ENCODE measurements at regions of chr1 and their contacts with region 1.

Region 1: GRCh38 chr1:33472349-33472980 is at the start of gene ZSCAN20:
- DNase-seq: peak; percentile 62 to 91 (median 80)
- ATAC-seq: peak; percentile 98
- H3K4me3 ChIP-seq: peak within 1 kb of the TSS; percentile 63
- H3K4me3 Mint-ChIP-seq: peak within 1 kb of the TSS; percentile 90
- H3K27ac ChIP-seq: peak within 1 kb of the TSS; percentile 31 to 39
- H3K27ac Mint-ChIP-seq: peak within 1 kb of the TSS; percentile 24
- H3K4me1 ChIP-seq: peaks cover 22% of the 10 kb centered on the region
- H3K4me1 Mint-ChIP-seq: peaks cover 38% of the 10 kb centered on the region
- H3K27me3 ChIP-seq: no peaks in the 10 kb centered on the region
- H3K27me3 Mint-ChIP-seq: no peaks in the 10 kb centered on the region
- CTCF ChIP-seq: no peak
- total RNA-seq, gene ZSCAN20: 0.27 to 0.50 TPM

Region 2: GRCh38 chr1:32639489-32640075 is 832.9 kb before region 1 on chr1:
- CTCF ChIA-PET with region 1: no interaction called
- POLR2A ChIA-PET with region 1: no interaction called
- intact Hi-C with region 1: loop called in 1 of 2 experiments (anchors 10 kb)
- DNase-seq: no peak
- ATAC-seq: no peak
- H3K4me3 ChIP-seq: no peak overlapping the region
- H3K4me3 Mint-ChIP-seq: no peak overlapping the region
- H3K27ac ChIP-seq: no peak overlapping the region
- H3K27ac Mint-ChIP-seq: no peak overlapping the region
- H3K4me1 ChIP-seq: no peaks in the 10 kb centered on the region
- H3K4me1 Mint-ChIP-seq: peaks cover 19% of the 10 kb centered on the region
- H3K27me3 ChIP-seq: no peaks in the 10 kb centered on the region
- H3K27me3 Mint-ChIP-seq: no peaks in the 10 kb centered on the region
- CTCF ChIP-seq: no peak

Region 3: DNA sequence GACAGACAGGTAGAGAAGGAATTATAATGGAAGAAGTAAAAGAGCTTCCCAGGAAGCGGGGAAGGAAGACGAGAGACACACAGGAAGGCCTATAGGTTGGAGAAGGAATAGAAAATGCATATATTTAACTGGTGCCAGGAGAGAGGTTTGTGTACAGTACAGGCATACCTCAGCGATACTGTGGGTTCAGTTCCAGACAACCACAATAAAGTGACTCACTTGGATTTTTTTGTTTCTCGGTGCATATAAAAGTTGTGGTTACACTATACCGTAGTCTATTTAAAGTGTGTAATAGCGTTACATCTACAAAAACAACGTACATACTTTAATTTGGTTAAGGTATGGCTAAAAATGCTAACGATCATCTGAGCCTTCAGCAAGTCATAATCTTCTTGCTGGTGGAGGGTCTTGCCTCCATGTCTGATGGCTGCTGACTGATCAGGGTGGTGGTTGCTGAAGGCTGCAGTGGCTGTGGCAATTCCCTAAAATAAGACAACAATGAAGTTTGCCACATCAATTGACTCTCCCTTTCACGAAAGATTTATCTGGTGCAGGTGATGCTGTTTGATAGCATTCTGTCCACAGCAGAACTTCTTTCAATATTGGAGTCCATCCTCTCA is 671.3 kb before region 1 on chr1:
- CTCF ChIA-PET with region 1: no interaction called
- POLR2A ChIA-PET with region 1: no interaction called
- intact Hi-C with region 1: no loop called
- DNase-seq: peak in 8 of 14 experiments; percentile 6 to 81 (median 26)
- ATAC-seq: peak; percentile 73
- H3K4me3 ChIP-seq: no peak overlapping the region
- H3K4me3 Mint-ChIP-seq: peak overlapping the region; percentile 21
- H3K27ac ChIP-seq: peak overlapping the region in 1 of 2 donors; percentile 17
- H3K27ac Mint-ChIP-seq: peak overlapping the region; percentile 84
- H3K4me1 ChIP-seq: peaks cover 49% of the 10 kb centered on the region
- H3K4me1 Mint-ChIP-seq: peaks cover 41% of the 10 kb centered on the region
- H3K27me3 ChIP-seq: no peaks in the 10 kb centered on the region
- H3K27me3 Mint-ChIP-seq: no peaks in the 10 kb centered on the region
- CTCF ChIP-seq: no peak

Region 4: DNA sequence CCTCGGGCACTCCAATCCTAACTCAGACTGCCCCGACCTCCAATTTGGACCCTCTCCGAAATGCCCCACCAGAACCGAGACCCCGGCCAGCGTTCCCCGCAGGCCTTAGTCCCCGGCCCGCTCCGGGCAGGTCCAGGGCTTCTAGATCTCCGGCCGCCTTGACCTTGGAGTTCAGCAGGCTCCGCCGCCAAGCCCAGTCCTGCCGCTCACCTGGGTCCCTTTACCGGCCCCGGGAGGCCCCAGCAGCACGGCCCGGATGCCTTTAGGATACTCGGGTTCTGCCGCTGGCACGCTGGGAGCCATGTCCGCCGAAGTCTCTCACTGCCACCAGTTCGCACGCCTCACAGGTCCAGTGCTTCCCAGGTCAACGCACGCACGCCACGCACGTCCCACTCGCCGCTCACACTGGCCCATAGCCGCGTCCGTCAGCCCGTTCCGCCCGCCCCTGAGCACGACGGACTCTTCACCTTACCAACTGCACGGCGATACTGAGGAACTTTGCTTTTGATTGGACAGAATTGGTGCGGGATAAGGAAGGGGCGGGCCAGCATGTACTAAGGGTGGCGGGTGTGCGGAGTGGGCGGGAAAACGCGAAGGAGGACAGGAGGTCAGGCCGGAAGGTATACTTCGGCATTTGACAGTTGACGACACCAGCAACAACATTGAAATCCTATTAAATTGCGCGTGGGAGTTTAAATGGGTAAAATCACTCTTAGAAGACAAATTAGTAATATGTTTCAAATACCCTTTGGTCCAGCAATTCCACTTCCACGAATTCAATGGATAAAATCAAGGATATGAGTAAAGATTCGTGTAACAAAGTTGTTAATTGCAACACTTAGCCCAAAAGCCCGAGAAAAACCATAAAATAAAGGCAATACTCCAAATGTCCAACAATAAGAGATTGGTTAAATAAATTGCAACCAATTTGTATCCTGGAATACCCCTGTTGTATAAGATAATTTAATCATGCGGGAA is 435.6 kb before region 1 on chr1 and contains the start of gene AK2:
- CTCF ChIA-PET with region 1: no interaction called
- POLR2A ChIA-PET with region 1: no interaction called
- intact Hi-C with region 1: loop called in 1 of 2 experiments (anchors 2 kb)
- DNase-seq: peak; percentile 71 to 95 (median 86)
- ATAC-seq: peak; percentile 99
- H3K4me3 ChIP-seq: peak within 1 kb of the TSS; percentile 93
- H3K4me3 Mint-ChIP-seq: peak within 1 kb of the TSS; percentile 98
- H3K27ac ChIP-seq: peak within 1 kb of the TSS in 1 of 2 donors; percentile 67
- H3K27ac Mint-ChIP-seq: peak within 1 kb of the TSS; percentile 34
- H3K4me1 ChIP-seq: peaks cover 35% of the 10 kb centered on the region
- H3K4me1 Mint-ChIP-seq: peaks cover 48% of the 10 kb centered on the region
- H3K27me3 ChIP-seq: no peaks in the 10 kb centered on the region
- H3K27me3 Mint-ChIP-seq: no peaks in the 10 kb centered on the region
- CTCF ChIP-seq: no peak
- total RNA-seq, gene AK2: 25.6 to 30.4 TPM

Region 5: DNA sequence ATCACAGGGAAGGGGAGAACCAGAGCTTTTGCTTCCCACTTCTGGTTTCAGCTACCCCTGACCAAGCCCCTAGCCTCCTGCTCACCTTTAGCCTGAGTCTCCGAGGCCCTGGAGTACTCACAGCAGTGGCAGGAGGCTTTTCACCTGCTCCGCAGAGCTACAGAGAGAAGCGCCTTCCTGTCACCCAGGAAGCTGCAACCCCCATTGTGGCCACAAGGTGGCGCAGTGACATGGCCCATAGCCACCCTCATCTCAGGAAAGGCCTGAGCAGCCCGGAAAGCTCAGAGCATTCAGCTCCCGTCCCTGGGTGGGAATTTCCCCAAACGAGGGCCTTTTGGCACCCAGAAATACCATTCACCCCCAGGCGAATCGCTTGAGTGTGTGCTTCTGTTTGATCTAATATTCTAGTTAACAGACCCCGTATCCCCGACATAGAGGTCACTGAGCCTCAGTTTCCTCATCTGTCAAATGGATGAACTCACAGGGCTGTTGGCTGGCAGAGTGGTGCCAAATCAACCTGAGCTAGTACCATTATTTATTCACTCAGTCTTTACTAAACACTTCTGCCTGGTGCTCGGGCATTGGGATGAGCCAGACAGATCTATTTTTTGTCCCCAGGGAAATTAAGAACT is 176.9 kb before region 1 on chr1:
- CTCF ChIA-PET with region 1: interaction called, 7 read pairs
- POLR2A ChIA-PET with region 1: no interaction called
- intact Hi-C with region 1: loop called (anchors 1 to 2 kb)
- DNase-seq: peak; percentile 74 to 91 (median 86)
- ATAC-seq: peak; percentile 93
- H3K4me3 ChIP-seq: no peak overlapping the region
- H3K4me3 Mint-ChIP-seq: no peak overlapping the region
- H3K27ac ChIP-seq: no peak overlapping the region
- H3K27ac Mint-ChIP-seq: peak overlapping the region; percentile 58
- H3K4me1 ChIP-seq: peaks cover 15% of the 10 kb centered on the region
- H3K4me1 Mint-ChIP-seq: peaks cover 23% of the 10 kb centered on the region
- H3K27me3 ChIP-seq: no peaks in the 10 kb centered on the region
- H3K27me3 Mint-ChIP-seq: no peaks in the 10 kb centered on the region
- CTCF ChIP-seq: peak; percentile 93

Region 6: DNA sequence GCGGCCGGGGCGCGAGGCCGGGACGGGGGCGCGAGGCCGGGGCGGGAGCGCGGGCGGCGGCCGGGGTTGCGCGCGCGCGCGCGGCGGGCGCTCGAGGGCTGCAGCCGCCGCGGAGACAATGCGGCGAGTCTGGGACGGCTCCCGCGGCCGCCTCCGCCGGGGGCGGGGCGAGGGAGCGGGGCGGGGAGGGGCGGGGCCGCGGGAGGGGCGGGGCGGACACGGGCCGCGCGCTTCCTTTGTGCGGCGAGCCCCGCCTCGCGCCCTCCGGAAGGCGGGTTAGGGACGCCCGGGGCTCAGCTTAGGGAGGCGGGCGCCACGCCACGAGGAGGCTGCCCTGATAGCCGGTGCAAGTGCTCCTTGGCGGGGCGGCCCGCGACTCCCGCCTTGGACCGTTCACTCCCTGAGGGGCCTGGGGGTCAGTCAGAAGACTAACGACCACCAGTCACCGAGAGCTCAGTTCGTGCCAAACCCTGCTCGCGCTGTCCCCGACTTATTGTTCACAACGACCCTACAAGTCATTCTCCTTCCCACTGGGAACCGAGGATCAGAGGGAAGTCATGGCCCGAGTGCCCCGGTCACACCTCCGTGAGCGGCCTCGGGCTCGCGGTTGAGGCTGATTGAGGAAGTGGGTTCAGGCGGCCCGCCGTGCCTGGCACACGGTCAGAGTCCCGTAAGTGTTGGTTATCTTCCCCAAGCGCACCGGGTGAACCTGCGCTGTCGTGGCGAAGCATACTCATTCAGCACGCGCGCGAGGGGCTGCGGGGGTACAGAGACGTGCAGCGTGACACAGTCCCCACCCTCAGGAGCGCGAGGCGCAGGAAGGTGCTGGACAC is 122.5 kb before region 1 on chr1:
- CTCF ChIA-PET with region 1: no interaction called
- POLR2A ChIA-PET with region 1: no interaction called
- intact Hi-C with region 1: loop called in 1 of 2 experiments (anchors 5 kb)
- DNase-seq: peak; percentile 53 to 92 (median 74)
- ATAC-seq: peak; percentile 86
- H3K4me3 ChIP-seq: peak overlapping the region; percentile 90
- H3K4me3 Mint-ChIP-seq: peak overlapping the region; percentile 87
- H3K27ac ChIP-seq: peak overlapping the region in 1 of 2 donors; percentile 56
- H3K27ac Mint-ChIP-seq: peak overlapping the region; percentile 84
- H3K4me1 ChIP-seq: peaks cover 30% of the 10 kb centered on the region
- H3K4me1 Mint-ChIP-seq: peaks cover 46% of the 10 kb centered on the region
- H3K27me3 ChIP-seq: no peaks in the 10 kb centered on the region
- H3K27me3 Mint-ChIP-seq: no peaks in the 10 kb centered on the region
- CTCF ChIP-seq: no peak

Region 7: DNA sequence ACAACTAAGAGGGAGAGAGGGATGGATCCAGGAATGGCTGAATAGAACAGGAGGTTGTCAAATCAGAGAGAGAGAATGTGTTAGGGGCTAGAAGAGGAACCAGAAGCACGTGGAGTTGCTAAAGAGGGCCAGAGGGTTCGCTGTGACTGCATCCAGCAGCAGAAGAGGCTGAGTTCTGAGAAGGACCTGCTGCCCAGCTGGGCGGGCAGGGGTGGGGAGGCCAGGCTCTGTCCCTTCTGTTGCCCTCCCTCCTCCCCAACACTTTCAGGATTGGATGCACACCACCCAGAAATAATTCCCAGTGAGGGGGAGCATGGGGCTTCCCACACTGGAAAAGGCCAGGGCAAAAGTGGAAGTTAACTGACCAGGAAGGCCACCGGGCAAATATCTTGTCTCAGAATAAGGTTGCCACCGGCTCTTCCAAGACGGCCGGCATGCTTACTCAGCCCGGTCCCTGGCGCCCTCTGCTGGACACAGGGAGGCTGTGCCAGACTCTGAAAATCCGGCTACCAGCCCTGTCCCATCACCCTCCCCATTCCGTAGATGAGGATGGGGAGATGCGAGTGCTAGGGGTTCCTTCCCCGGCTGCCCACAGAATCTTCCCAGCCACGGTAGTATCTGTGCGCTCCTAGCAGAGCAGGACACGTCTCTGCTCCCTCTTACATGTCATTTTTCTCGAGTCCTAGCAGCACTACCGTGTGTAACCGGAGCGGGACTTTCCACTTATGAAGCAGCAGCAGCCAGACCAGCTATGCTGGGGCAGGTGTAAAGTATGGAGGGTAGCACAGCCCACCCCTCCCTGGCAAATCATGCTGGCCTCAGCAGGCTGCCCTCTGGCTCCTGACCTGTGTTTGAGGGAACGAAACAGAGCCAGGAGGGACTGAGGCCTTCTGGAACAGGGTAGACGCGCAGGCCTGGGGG is 104.7 kb before region 1 on chr1:
- CTCF ChIA-PET with region 1: no interaction called
- POLR2A ChIA-PET with region 1: no interaction called
- intact Hi-C with region 1: loop called in 1 of 2 experiments (anchors 5 kb)
- DNase-seq: peak; percentile 77 to 93 (median 86)
- ATAC-seq: peak; percentile 99
- H3K4me3 ChIP-seq: no peak overlapping the region
- H3K4me3 Mint-ChIP-seq: no peak overlapping the region
- H3K27ac ChIP-seq: no peak overlapping the region
- H3K27ac Mint-ChIP-seq: no peak overlapping the region
- H3K4me1 ChIP-seq: peaks cover 9% of the 10 kb centered on the region
- H3K4me1 Mint-ChIP-seq: no peaks in the 10 kb centered on the region
- H3K27me3 ChIP-seq: peaks cover 0 to 4% of the 10 kb centered on the region in 2 experiments
- H3K27me3 Mint-ChIP-seq: no peaks in the 10 kb centered on the region
- CTCF ChIP-seq: peak; percentile 97

Region 8: GRCh38 chr1:33420870-33421775 is 51.3 kb before region 1 on chr1:
- CTCF ChIA-PET with region 1: no interaction called
- POLR2A ChIA-PET with region 1: no interaction called
- intact Hi-C with region 1: no loop called
- DNase-seq: peak in 2 of 14 experiments; percentile 26 to 31
- ATAC-seq: no peak
- H3K4me3 ChIP-seq: no peak overlapping the region
- H3K4me3 Mint-ChIP-seq: no peak overlapping the region
- H3K27ac ChIP-seq: no peak overlapping the region
- H3K27ac Mint-ChIP-seq: no peak overlapping the region
- H3K4me1 ChIP-seq: no peaks in the 10 kb centered on the region
- H3K4me1 Mint-ChIP-seq: no peaks in the 10 kb centered on the region
- H3K27me3 ChIP-seq: peaks cover 0 to 5% of the 10 kb centered on the region in 2 experiments
- H3K27me3 Mint-ChIP-seq: peaks cover 47% of the 10 kb centered on the region
- CTCF ChIP-seq: no peak

Region 9: DNA sequence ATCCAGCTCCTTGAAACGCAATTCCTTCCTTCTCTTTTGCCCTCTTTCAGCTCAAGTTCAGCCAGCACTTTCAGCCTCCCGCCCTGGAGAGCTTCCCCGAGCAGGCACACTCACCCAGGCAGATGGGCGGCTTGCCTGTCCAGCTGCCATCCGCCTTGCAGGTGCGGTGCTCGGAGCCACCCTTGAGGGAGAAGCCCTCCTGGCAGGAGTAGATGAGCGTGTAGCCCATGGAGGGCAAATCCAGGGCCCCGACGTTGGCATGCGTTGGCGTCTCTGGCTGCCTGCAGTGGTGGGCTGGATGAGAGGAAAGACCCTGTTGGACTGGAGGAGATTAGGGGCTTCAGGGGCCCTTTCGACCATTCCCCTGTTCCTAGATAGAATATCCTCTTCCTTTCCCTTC is 60.5 kb after region 1 on chr1:
- CTCF ChIA-PET with region 1: no interaction called
- POLR2A ChIA-PET with region 1: no interaction called
- intact Hi-C with region 1: no loop called
- DNase-seq: no peak
- ATAC-seq: no peak
- H3K4me3 ChIP-seq: no peak overlapping the region
- H3K4me3 Mint-ChIP-seq: no peak overlapping the region
- H3K27ac ChIP-seq: no peak overlapping the region
- H3K27ac Mint-ChIP-seq: no peak overlapping the region
- H3K4me1 ChIP-seq: no peaks in the 10 kb centered on the region
- H3K4me1 Mint-ChIP-seq: no peaks in the 10 kb centered on the region
- H3K27me3 ChIP-seq: no peaks in the 10 kb centered on the region
- H3K27me3 Mint-ChIP-seq: peaks cover 27% of the 10 kb centered on the region
- CTCF ChIP-seq: no peak

Measured in CD4-positive, alpha-beta T cell (primary cell).